H1 (cell line): ENCODE measurements at regions of chr11 and their contacts with region 1.

Region 1: GRCh38 chr11:76807206-76807875 is 24.2 kb downstream of the TSKU start:
- DNase-seq: peak in 1 of 2 experiments; percentile 98
- H3K4me3 ChIP-seq: no peak overlapping the region
- H3K27ac ChIP-seq: no peak overlapping the region
- H3K4me1 ChIP-seq: peaks cover 0 to 4% (median 2%) of the 10 kb centered on the region in 4 experiments; a peak in 2 of 7 replicates
- H3K27me3 ChIP-seq: no peaks in the 10 kb centered on the region; a peak in 1 of 7 replicates
- CTCF ChIP-seq: peak; percentile 80 to 94 (median 87)
- EP300 ChIP-seq: no peak
- POLR2A ChIP-seq: no peak
- RAD21 ChIP-seq: peak; percentile 67 to 70

Region 2: GRCh38 chr11:76577199-76577920 is 230.0 kb before region 1 on chr11:
- CTCF ChIA-PET with region 1: no interaction called
- POLR2A ChIA-PET with region 1: no interaction called
- DNase-seq: no peak
- H3K4me3 ChIP-seq: no peak overlapping the region
- H3K27ac ChIP-seq: no peak overlapping the region
- H3K4me1 ChIP-seq: peaks cover 0 to 11% (median 2%) of the 10 kb centered on the region in 4 experiments; a peak in 5 of 7 replicates
- H3K27me3 ChIP-seq: no peaks in the 10 kb centered on the region
- CTCF ChIP-seq: no peak
- EP300 ChIP-seq: no peak
- POLR2A ChIP-seq: no peak
- RAD21 ChIP-seq: no peak

Region 3: GRCh38 chr11:76823481-76824078 is 16.2 kb after region 1 on chr11:
- CTCF ChIA-PET with region 1: interaction called, 10 read pairs
- POLR2A ChIA-PET with region 1: interaction called, 3 read pairs
- DNase-seq: peak in 1 of 2 experiments; percentile 43
- H3K4me3 ChIP-seq: no peak overlapping the region
- H3K27ac ChIP-seq: no peak overlapping the region
- H3K4me1 ChIP-seq: peaks cover 0 to 5% (median 1%) of the 10 kb centered on the region in 4 experiments; a peak in 3 of 7 replicates
- H3K27me3 ChIP-seq: no peaks in the 10 kb centered on the region
- CTCF ChIP-seq: no peak
- EP300 ChIP-seq: no peak
- POLR2A ChIP-seq: no peak
- RAD21 ChIP-seq: no peak

Region 4: DNA sequence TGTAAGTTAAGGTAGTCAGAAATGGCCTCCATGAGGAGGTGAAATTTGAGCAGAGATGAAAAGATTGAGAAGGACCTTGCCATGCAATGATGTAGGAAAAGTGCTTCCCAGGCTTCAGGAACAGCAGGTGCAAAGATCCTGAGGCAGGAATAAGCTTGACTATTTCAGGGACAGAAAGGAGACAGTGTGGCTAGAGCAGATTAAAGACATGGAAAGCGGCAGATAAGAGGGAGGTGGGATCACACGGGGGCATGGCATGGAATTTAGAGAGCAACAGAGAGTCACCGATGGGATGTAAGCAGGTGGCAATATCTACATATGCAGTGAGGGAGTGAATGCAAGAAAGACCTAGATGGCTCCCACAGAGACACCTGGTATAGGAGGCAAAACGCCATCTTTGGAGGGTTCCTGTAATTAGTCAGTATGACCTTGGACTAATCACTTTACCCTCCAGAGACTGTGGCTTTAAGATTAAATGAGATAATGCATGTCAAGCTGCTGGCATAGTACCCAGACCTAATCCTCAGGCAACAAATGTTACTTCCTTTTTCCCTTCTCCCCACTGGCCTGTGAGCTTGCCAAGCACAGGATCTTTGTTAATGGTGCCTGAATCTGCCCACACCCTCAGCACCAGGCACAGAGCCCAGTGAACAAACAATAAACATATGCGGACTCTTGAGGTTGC is 28.7 kb after region 1 on chr11:
- CTCF ChIA-PET with region 1: interaction called, 25 read pairs
- POLR2A ChIA-PET with region 1: interaction called, 3 read pairs
- DNase-seq: no peak
- H3K4me3 ChIP-seq: no peak overlapping the region
- H3K27ac ChIP-seq: no peak overlapping the region
- H3K4me1 ChIP-seq: 0 out of 7 replicates have a peak, but pooled peaks cover 0 to 4% (median 0%) of the 10 kb centered on the region in 4 experiments
- H3K27me3 ChIP-seq: no peaks in the 10 kb centered on the region
- CTCF ChIP-seq: no peak
- EP300 ChIP-seq: no peak
- POLR2A ChIP-seq: no peak
- RAD21 ChIP-seq: no peak

Region 5: GRCh38 chr11:77522215-77522614 is 714.9 kb after region 1 on chr11:
- CTCF ChIA-PET with region 1: no interaction called
- POLR2A ChIA-PET with region 1: no interaction called
- DNase-seq: no peak
- H3K4me3 ChIP-seq: no peak overlapping the region
- H3K27ac ChIP-seq: no peak overlapping the region
- H3K4me1 ChIP-seq: peaks cover 0 to 9% (median 2%) of the 10 kb centered on the region in 4 experiments; a peak in 4 of 7 replicates
- H3K27me3 ChIP-seq: peaks cover 0 to 1% (median 0%) of the 10 kb centered on the region in 4 experiments; a peak in 1 of 7 replicates
- CTCF ChIP-seq: no peak
- EP300 ChIP-seq: no peak
- POLR2A ChIP-seq: no peak
- RAD21 ChIP-seq: no peak